ENCODE measurements at regions of chr2 and their contacts with region 1.

Region 1: DNA sequence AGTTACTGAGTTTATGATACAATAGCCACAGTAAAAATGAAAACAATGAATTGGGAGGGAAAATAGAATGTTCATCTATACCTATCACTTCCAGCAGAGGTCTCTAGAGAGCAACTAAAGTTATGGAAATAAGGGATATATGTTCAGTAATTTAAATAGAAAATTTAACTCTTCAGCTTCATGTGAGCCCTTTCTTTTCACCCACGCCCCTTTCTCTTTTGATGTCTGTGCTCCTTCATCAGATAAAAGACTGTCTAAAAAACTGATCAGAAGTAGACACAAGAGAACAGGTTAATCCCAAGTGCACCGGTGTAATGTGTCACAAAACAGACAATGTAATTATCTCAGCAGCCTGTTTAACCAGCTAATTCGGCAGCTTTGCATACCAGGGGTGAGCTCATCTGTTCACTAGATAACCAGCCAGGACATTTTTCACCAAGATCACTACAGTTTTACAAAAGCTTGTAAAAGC is 238.5 kb upstream of the ERBB4 start:
- DNase-seq: no peak
- ATAC-seq: no peak

Region 2: GRCh38 chr2:212892193-212892592 is 115.1 kb after region 1 on chr2:
- intact Hi-C with region 1: loop called (anchors 5 to 10 kb)
- DNase-seq: no peak
- ATAC-seq: no peak

Region 3: DNA sequence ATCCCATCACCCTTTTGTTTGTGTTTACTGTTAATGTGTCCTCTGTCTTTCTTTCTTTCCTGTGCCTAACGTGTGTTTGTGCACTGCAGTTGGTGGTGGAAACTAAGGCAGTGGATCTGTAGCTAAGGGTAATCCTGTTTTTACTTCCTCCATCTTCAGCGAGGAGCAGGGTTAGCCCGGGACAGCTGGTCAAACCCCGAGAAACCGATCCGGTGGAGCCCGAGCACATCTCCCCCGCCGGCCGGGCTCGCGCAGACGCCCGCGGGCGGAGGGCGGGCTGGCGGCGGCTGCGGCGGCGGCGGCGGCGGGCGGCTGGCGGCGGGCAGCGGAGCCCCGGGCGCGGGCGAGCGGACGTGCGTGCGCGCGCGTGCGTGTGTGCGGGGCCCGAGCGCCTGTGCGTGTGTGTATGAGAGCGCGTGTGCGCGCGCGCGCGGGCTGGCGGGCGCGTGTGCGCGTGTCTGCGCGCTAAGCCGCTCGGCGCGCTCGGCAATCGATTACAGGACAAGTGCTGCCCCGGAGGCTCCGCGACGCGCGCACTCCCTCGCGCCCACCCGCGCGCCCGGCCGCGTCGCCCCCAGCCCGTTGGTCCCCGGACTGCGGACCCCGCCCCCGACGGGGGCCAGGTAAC is 374.5 kb after region 1 on chr2 and contains the start of gene IKZF2:
- intact Hi-C with region 1: loop called (anchors 2 to 5 kb)
- DNase-seq: peak; percentile 90
- ATAC-seq: peak; percentile 96
- total RNA-seq, gene IKZF2: 3.8 to 6.3 TPM

Measured in left cardiac atrium (tissue), 4 donors.